SK-N-SH (cell line): ENCODE measurements at regions of chr7 and their contacts with region 1.

Region 1: GRCh38 chr7:35519971-35520809 is 174.7 kb downstream of the HERPUD2 start:
- DNase-seq: peak; percentile 84
- H3K4me3 ChIP-seq: no peak overlapping the region; a peak in 1 of 4 replicates
- H3K27ac ChIP-seq: no peak overlapping the region
- H3K4me1 ChIP-seq: peaks cover 0 to 19% of the 10 kb centered on the region in 2 experiments; a peak in 2 of 4 replicates
- H3K27me3 ChIP-seq: peaks cover 10% of the 10 kb centered on the region; the same call in 1 of the 2 replicates
- CTCF ChIP-seq: peak; percentile 95
- EP300 ChIP-seq: no peak
- RAD21 ChIP-seq: peak; percentile 99

Region 2: DNA sequence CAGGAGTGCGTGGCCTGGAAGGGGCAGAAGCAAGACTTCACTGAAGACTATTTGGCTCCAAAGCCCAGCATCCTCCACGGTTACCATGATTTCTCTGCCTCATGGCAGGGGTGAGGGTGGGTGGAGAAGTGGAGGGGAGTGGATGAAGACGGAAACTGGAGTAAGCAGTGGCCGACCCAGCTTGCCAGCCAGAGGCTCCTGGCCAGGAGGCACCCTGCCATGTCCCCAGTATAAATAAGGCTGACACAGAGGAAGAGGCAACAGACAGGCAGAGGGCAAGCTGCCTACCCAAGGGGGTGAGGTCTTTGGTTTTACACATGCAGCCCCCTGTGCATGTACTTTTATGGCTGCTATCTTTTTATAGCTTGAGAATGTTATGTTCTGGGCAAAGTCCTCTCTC is 163.7 kb before region 1 on chr7:
- CTCF ChIA-PET with region 1: interaction called, 13 read pairs
- POLR2A ChIA-PET with region 1: no interaction called
- DNase-seq: no peak
- H3K4me3 ChIP-seq: no peak overlapping the region
- H3K27ac ChIP-seq: no peak overlapping the region
- H3K4me1 ChIP-seq: peaks cover 0 to 22% of the 10 kb centered on the region in 2 experiments; a peak in 2 of 4 replicates
- H3K27me3 ChIP-seq: no peaks in the 10 kb centered on the region
- CTCF ChIP-seq: no peak
- EP300 ChIP-seq: no peak
- RAD21 ChIP-seq: no peak

Region 3: DNA sequence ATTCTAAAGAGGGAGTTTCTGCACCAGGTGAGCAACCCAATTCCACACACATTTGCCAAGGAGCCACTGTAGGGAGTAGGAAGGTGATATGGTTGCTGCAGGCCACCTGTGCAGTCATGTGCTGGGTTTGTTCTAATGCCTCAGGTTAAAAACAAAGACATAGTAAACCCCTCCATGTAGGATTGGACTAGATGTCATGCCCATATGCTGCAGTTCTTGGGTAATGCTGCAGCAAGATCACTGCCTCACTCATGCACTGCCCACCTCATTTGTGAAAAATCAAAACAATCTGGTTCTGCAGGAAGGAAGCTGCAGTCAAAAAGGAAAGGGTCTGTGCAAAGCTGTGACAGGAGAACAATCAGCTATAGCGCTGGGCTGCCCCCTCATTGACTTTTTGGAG is 129.1 kb before region 1 on chr7:
- CTCF ChIA-PET with region 1: interaction called, 11 read pairs
- POLR2A ChIA-PET with region 1: no interaction called
- DNase-seq: no peak
- H3K4me3 ChIP-seq: no peak overlapping the region
- H3K27ac ChIP-seq: no peak overlapping the region
- H3K4me1 ChIP-seq: no peaks in the 10 kb centered on the region; a peak in 1 of 4 replicates
- H3K27me3 ChIP-seq: peaks cover 10% of the 10 kb centered on the region; the same call in 1 of the 2 replicates
- CTCF ChIP-seq: no peak
- EP300 ChIP-seq: no peak
- RAD21 ChIP-seq: no peak

Region 4: GRCh38 chr7:35437619-35438275 is 82.4 kb before region 1 on chr7:
- CTCF ChIA-PET with region 1: interaction called, 11 read pairs
- POLR2A ChIA-PET with region 1: no interaction called
- DNase-seq: no peak
- H3K4me3 ChIP-seq: no peak overlapping the region
- H3K27ac ChIP-seq: peak overlapping the region in 1 of 2 experiments; percentile 94; a peak in 2 of 4 replicates
- H3K4me1 ChIP-seq: peaks cover 0 to 17% of the 10 kb centered on the region in 2 experiments; a peak in 2 of 4 replicates
- H3K27me3 ChIP-seq: no peaks in the 10 kb centered on the region
- CTCF ChIP-seq: no peak
- EP300 ChIP-seq: no peak
- RAD21 ChIP-seq: no peak

Region 5: DNA sequence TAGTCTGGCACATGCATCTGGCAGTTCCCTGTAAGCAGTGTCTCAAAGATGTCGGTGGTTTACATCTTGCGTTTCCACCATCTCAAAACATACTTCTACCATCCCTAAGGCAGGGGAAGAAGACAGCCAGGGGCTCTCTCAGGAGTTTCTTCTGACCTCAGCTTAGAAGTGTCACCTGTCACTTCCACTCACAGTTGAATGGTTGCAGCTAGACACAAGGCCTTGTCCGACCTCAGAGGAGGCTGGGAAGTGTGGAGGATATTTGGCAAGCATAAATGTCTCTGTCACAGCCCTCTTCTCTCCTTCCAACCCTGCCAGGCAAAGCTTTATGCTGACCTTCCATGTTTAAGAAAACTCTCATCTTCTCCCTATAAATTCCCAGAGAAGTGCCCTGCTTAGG is 18.5 kb before region 1 on chr7:
- CTCF ChIA-PET with region 1: interaction called, 87 read pairs
- POLR2A ChIA-PET with region 1: no interaction called
- DNase-seq: no peak
- H3K4me3 ChIP-seq: no peak overlapping the region
- H3K27ac ChIP-seq: no peak overlapping the region
- H3K4me1 ChIP-seq: no peaks in the 10 kb centered on the region; a peak in 1 of 4 replicates
- H3K27me3 ChIP-seq: no peaks in the 10 kb centered on the region; the same call in 1 of the 2 replicates
- CTCF ChIP-seq: no peak
- EP300 ChIP-seq: no peak
- RAD21 ChIP-seq: no peak

Region 6: GRCh38 chr7:35537067-35538023 is 17.2 kb after region 1 on chr7:
- CTCF ChIA-PET with region 1: interaction called, 32 read pairs
- POLR2A ChIA-PET with region 1: no interaction called
- DNase-seq: peak; percentile 92
- H3K4me3 ChIP-seq: peak overlapping the region; percentile 37 to 65
- H3K27ac ChIP-seq: no peak overlapping the region
- H3K4me1 ChIP-seq: peaks cover 0 to 2% of the 10 kb centered on the region in 2 experiments; a peak in 1 of 4 replicates
- H3K27me3 ChIP-seq: peaks cover 13% of the 10 kb centered on the region
- CTCF ChIP-seq: peak; percentile 99
- EP300 ChIP-seq: no peak
- RAD21 ChIP-seq: peak; percentile 98

Region 7: DNA sequence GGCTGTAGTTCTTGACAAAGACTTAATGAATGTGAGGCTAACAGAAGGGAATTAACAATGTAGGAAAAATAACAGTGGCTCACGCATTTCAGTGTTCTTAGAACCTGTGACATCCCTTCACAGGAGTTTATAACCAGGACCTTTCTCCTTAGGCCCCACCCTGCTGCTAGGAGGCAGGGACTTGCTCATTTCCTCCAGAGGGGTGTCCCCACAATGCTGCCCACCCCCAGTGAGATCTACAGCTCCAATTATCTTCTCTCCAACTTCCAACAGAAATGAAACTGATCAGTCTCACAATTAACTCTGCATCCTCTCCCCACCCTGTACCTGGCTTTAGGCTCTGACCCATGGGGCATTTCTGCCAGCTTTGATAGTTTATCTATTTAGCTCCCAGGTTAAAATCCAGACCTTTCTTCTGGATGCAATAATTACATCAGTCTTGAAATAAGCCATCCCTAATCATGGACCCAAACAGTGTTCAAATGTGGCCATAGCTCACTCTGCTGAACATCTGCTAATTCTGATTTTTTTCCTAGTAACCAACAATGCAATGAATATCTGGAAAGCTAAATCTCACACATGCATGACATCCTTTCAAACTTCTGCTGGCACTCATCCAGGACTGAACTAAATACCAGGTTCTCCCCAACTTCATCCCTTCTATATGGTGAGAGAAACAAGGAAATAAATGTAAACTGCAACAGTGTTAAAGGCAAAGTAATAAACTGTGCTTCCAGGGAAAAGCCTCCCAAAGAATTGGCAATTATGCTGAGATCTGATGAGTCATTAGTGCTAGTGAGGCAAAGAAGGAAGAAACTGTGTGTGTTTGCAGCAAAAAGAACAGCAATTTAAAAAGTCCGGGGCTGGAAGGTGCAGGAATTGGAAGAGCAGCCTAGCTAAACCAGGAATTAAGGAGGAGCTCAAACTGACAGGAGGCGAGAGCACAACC is 110.1 kb after region 1 on chr7:
- CTCF ChIA-PET with region 1: interaction called, 28 read pairs
- POLR2A ChIA-PET with region 1: no interaction called
- DNase-seq: no peak
- H3K4me3 ChIP-seq: no peak overlapping the region
- H3K27ac ChIP-seq: peak overlapping the region in 1 of 2 experiments; percentile 56; a peak in 3 of 4 replicates
- H3K4me1 ChIP-seq: peaks cover 10 to 12% of the 10 kb centered on the region in 2 experiments; a peak in 3 of 4 replicates
- H3K27me3 ChIP-seq: no peaks in the 10 kb centered on the region
- CTCF ChIP-seq: no peak
- EP300 ChIP-seq: peak in 1 of 2 experiments; percentile 1; a peak in 1 of 4 replicates
- RAD21 ChIP-seq: peak; percentile 5; the same call in 1 of the 2 replicates